AG04450 (cell line): ENCODE measurements at regions of chr2 and their contacts with region 1.

Region 1: GRCh38 chr2:42086500-42086953 is 38.7 kb downstream of the PKDCC start:
- DNase-seq: peak; percentile 45
- H3K4me3 ChIP-seq: no peak overlapping the region
- H3K27ac ChIP-seq: no peak overlapping the region
- H3K27me3 ChIP-seq: peaks cover 4% of the 10 kb centered on the region
- CTCF ChIP-seq: peak; percentile 75

Region 2: GRCh38 chr2:41853427-41854216 is 232.9 kb before region 1 on chr2:
- CTCF ChIA-PET with region 1: interaction called, 418 read pairs
- POLR2A ChIA-PET with region 1: interaction called, 4 read pairs
- DNase-seq: peak; percentile 39
- H3K4me3 ChIP-seq: no peak overlapping the region
- H3K27ac ChIP-seq: peak overlapping the region; percentile 25
- H3K27me3 ChIP-seq: peaks cover 16% of the 10 kb centered on the region
- CTCF ChIP-seq: peak; percentile 78

Region 3: GRCh38 chr2:41869542-41870264 is 216.8 kb before region 1 on chr2:
- CTCF ChIA-PET with region 1: interaction called, 481 read pairs
- POLR2A ChIA-PET with region 1: interaction called, 22 read pairs
- DNase-seq: peak; percentile 30
- H3K4me3 ChIP-seq: no peak overlapping the region
- H3K27ac ChIP-seq: no peak overlapping the region
- H3K27me3 ChIP-seq: no peaks in the 10 kb centered on the region
- CTCF ChIP-seq: peak; percentile 89

Region 4: GRCh38 chr2:41899189-41899588 is 187.3 kb before region 1 on chr2:
- CTCF ChIA-PET with region 1: interaction called, 10 read pairs
- POLR2A ChIA-PET with region 1: interaction called, 4 read pairs
- DNase-seq: no peak
- H3K4me3 ChIP-seq: no peak overlapping the region
- H3K27ac ChIP-seq: no peak overlapping the region
- H3K27me3 ChIP-seq: peaks cover 9% of the 10 kb centered on the region
- CTCF ChIP-seq: no peak

Region 5: DNA sequence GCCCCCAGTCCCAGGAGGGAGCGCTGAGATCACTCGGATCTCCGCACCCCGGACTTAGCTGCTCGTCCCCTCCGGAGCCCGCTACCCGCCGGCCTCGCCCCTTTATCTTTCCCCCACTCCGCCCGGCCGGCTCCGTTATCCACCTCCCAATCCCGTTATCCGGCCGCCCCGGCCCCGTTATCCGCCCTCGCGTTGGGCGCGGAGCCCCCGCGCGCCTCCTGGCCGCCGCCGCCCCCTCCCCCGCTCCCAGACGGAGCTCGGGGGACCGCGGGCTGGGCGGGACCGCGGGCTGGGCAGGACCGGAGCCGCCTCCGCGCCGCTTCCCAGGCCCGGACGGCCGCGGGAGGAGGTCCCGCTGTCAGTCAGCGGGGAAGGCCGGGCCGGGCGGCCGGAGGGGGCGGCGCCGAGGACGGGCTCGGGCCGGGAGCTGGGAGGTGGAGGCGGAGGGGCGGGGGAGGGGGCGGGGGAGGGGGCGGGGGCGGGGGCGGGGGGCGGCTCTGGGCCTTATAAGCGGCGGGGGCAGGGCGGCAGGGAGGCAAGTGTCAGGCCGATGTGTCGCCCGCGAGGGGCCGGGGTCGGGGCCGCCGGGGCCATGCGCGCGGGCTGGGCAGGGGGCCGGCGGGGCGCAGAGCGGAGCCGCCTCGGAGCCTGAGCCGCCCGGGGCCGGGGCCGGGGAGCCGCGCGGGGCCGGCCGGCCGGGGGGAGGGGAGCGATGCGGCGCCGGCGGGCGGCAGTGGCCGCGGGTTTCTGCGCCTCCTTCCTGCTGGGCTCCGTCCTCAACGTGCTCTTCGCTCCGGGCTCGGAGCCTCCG is 38.8 kb before region 1 on chr2 and contains the start of gene PKDCC:
- CTCF ChIA-PET with region 1: interaction called, 20 read pairs
- POLR2A ChIA-PET with region 1: interaction called, 20 read pairs
- DNase-seq: peak; percentile 37
- H3K4me3 ChIP-seq: peak within 1 kb of the TSS; percentile 93
- H3K27ac ChIP-seq: peak within 1 kb of the TSS; percentile 61
- H3K27me3 ChIP-seq: peaks cover 6% of the 10 kb centered on the region
- CTCF ChIP-seq: no peak
- polyA plus RNA-seq, gene PKDCC: 87.0 and 107 TPM in 2 replicates

Region 6: GRCh38 chr2:42060718-42061619 is 25.6 kb before region 1 on chr2:
- CTCF ChIA-PET with region 1: interaction called, 13 read pairs
- POLR2A ChIA-PET with region 1: interaction called, 12 read pairs
- DNase-seq: no peak
- H3K4me3 ChIP-seq: no peak overlapping the region
- H3K27ac ChIP-seq: peak overlapping the region; percentile 21
- H3K27me3 ChIP-seq: no peaks in the 10 kb centered on the region
- CTCF ChIP-seq: no peak